HEK293 (cell line): ENCODE measurements at regions of chr3 and their contacts with region 1.

Region 1: DNA sequence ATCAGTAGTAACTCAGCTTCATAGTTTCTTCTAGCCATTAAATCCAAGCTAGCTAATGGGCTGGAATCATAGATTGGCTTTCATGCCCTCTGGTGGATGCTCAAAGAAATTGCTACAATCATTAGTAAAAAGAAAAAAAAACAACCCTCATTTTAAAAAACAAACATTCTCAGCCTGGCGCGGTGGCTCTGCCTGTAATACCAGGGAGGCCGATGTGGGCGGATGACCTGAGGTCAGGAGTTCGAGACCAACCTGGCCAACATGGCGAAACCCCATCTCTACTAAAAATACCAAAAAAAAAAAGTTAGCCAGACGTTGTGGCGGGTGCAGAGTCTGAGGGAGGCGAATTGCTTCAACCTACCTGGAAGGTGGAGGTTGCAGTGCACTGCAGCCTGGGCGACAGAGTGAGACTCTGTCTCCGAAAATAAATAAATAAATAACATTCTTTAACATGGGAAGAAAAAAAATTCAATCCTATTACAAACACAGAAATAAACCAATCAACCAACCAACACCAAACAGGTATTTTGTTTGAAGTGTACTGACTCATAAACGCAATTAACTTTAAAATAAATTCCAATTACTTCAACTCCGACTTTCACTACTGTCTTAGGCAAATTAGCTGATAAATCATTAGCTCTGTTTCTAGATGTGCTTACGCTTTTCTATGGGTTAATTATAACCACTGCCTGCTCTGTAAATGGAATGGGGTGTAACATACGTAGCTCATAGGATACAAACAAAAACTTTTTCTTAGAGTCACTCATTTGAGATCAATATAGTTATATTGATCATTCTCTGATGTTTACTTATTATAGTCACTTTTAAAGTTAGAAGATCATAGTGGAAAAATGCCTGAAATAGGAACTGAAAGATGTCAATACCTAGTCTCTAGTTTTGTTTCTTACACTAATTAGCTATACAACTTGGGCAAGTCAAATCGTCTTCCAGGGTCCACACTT is 24.9 kb downstream of the TMEM207 start:
- H3K4me3 ChIP-seq: no peak overlapping the region
- H3K27ac ChIP-seq: no peak overlapping the region
- H3K4me1 ChIP-seq: no peaks in the 10 kb centered on the region
- CTCF ChIP-seq: peak; percentile 68; the same call in 1 of the 2 replicates

Region 2: GRCh38 chr3:190414297-190414696 is 10.5 kb before region 1 on chr3:
- CTCF ChIA-PET with region 1: interaction called, 13 read pairs
- POLR2A ChIA-PET with region 1: no interaction called
- H3K4me3 ChIP-seq: no peak overlapping the region
- H3K27ac ChIP-seq: no peak overlapping the region
- H3K4me1 ChIP-seq: no peaks in the 10 kb centered on the region
- CTCF ChIP-seq: no peak